Mammary epithelial cell (primary cell): ENCODE measurements at regions of chr11 and their contacts with region 1.

Region 1: GRCh38 chr11:112074026-112074811 is at the start of gene NKAPD1:
- DNase-seq: peak; percentile 86
- H3K4me3 ChIP-seq: peak within 1 kb of the TSS; percentile 62 to 94 (median 81)
- H3K27ac ChIP-seq: peak within 1 kb of the TSS; percentile 87
- H3K4me1 ChIP-seq: peaks cover 12% of the 10 kb centered on the region
- H3K27me3 ChIP-seq: no peaks in the 10 kb centered on the region
- CTCF ChIP-seq: peak in 1 of 2 donors; percentile 9
- total RNA-seq, gene NKAPD1: 16.9 to 17.3 TPM

Region 2: DNA sequence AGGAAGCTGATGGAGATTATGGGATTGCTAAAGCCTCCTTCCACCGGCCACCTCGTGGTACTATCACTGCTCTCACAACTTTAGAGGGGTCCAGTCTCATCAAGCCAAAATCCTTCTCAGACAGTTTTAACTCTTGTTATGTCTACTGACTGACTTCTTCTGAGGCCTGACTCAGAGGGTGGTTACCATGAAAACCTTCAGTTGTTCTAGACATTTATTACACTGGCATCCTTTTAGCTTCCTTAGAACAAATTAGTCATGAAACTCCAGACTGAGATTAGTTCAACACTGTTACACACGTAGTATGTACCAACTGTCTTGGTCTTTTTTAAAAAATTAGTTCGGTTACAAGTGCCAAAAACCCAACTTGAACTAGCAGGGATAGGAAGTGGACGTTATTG is 129.6 kb before region 1 on chr11:
- CTCF ChIA-PET with region 1: no interaction called
- dilution Hi-C with region 1: no loop called
- in situ Hi-C with region 1: no loop called
- intact Hi-C with region 1: loop called (anchors 5 kb)
- DNase-seq: peak; percentile 88
- H3K4me3 ChIP-seq: no peak overlapping the region
- H3K27ac ChIP-seq: peak overlapping the region; percentile 95
- H3K4me1 ChIP-seq: peaks cover 31% of the 10 kb centered on the region
- H3K27me3 ChIP-seq: no peaks in the 10 kb centered on the region
- CTCF ChIP-seq: no peak

Region 3: GRCh38 chr11:112024773-112025678 is 49.2 kb before region 1 on chr11 and contains the start of gene DLAT:
- CTCF ChIA-PET with region 1: no interaction called
- dilution Hi-C with region 1: no loop called
- in situ Hi-C with region 1: no loop called
- intact Hi-C with region 1: loop called (anchors 2 kb)
- DNase-seq: peak; percentile 80
- H3K4me3 ChIP-seq: peak within 1 kb of the TSS; percentile 58 to 90 (median 72)
- H3K27ac ChIP-seq: peak within 1 kb of the TSS; percentile 75
- H3K4me1 ChIP-seq: peaks cover 8% of the 10 kb centered on the region
- H3K27me3 ChIP-seq: no peaks in the 10 kb centered on the region
- CTCF ChIP-seq: no peak
- total RNA-seq, gene DLAT: 38.6 to 42.0 TPM

Region 4: DNA sequence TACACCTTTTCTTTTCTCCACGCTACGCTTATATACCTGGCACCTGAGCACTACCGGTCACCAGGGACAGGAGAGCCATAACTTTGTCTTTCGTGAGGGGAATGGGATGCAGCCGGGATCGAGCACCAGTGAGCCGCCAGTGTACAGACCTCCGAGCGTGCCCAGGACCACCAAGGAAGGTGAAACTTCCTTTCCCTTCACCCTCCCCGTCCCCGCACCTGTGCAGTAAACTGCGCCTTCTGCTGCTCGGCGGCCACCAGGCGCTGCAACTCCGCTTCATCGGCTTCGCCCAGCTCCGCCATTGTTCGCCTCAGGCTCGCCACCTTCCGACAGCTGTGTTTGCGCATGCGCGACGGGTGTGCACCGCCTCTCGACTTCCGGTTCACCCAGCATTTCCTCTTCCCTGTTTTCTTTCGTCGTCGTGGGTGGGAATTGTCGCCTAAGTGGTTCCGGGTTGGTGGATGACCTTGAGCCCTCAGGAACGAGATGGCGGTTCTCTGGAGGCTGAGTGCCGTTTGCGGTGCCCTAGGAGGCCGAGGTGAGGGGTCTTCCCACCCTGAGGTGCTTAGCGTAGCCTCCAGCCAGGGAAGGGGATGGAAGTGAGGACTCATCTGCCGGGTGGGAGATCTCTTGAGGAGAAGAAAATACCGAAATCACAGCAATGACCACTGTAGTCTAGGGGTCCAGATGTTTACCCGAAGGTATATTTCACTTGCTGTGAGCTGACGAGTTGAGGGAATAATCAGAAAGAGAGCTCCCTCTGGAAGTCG is 12.4 kb after region 1 on chr11 and contains the starts of genes SDHD and TIMM8B:
- CTCF ChIA-PET with region 1: no interaction called
- dilution Hi-C with region 1: no loop called
- in situ Hi-C with region 1: no loop called
- intact Hi-C with region 1: loop called (anchors 1 kb)
- DNase-seq: peak; percentile 95
- H3K4me3 ChIP-seq: peak within 1 kb of the TSS; percentile 93 to 98 (median 93)
- H3K27ac ChIP-seq: peak within 1 kb of the TSS; percentile 80
- H3K4me1 ChIP-seq: peaks cover 10% of the 10 kb centered on the region
- H3K27me3 ChIP-seq: no peaks in the 10 kb centered on the region
- CTCF ChIP-seq: peak in 1 of 2 donors; percentile 46
- total RNA-seq, gene SDHD: 57.7 to 58.5 TPM
- total RNA-seq, gene TIMM8B: 21.8 to 58.7 TPM

Region 5: DNA sequence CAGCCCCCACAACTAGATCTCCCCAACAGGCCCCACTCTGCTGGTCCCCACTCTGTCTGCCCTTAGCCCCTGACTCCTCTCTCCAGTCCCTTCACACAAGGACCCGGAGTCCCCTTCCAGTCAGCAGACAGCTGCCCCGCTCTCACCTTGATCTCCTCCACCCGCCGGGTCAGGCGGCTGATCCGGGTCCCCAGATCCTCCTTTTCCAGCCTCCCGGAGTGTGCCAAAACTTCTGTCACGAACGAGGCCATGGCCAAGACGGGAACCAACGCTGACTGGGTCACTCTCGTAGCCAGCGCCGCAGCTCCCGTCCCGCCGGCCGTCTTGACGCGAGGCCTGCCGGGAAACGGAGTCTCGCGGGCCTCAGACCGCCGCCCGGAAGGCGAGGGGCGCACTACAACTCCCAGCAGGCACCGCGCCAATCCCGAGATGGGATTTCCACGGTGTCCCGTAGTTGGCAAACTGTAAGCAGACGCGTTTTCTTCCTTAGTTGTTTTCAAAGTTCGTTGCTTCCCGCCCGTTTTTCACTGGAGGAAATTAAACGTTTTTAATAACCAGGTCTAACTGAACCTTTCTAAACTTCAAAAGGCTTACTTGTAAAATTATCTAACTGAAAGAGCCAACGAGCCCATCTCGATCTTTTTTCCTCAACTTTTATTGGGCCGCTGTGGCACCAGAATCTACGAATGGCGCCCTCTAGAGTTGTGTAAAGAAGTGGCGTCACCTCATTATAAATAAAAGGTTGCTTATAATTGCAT is 1699.4 kb after region 1 on chr11 and contains the start of gene ZW10:
- CTCF ChIA-PET with region 1: no interaction called
- dilution Hi-C with region 1: no loop called
- in situ Hi-C with region 1: no loop called
- intact Hi-C with region 1: loop called (anchors 10 kb)
- DNase-seq: peak; percentile 96
- H3K4me3 ChIP-seq: peak within 1 kb of the TSS; percentile 66 to 87 (median 66)
- H3K27ac ChIP-seq: peak within 1 kb of the TSS; percentile 86
- H3K4me1 ChIP-seq: peaks cover 18% of the 10 kb centered on the region
- H3K27me3 ChIP-seq: no peaks in the 10 kb centered on the region
- CTCF ChIP-seq: peak; percentile 80 to 86
- total RNA-seq, gene ZW10: 18.6 to 22.5 TPM